ENCODE measurements at regions of chr5 and their contacts with region 1.

Region 1: GRCh38 chr5:146516151-146516475 is at the start of gene GPR151:
- DNase-seq: no peak
- H3K4me3 ChIP-seq: no peak within 1 kb of the TSS
- H3K4me3 Mint-ChIP-seq: no peak within 1 kb of the TSS
- H3K27ac ChIP-seq: no peak within 1 kb of the TSS
- H3K27ac Mint-ChIP-seq: no peak within 1 kb of the TSS
- H3K4me1 ChIP-seq: no peaks in the 10 kb centered on the region
- H3K4me1 Mint-ChIP-seq: no peaks in the 10 kb centered on the region
- H3K27me3 ChIP-seq: no peaks in the 10 kb centered on the region
- H3K27me3 Mint-ChIP-seq: peaks cover 0 to 1% of the 10 kb centered on the region in 2 donors
- total RNA-seq, gene GPR151: not detected

Region 2: GRCh38 chr5:146451411-146452073 is 64.6 kb before region 1 on chr5:
- CTCF ChIA-PET with region 1: no interaction called
- POLR2A ChIA-PET with region 1: no interaction called
- intact Hi-C with region 1: no loop called
- DNase-seq: no peak
- H3K4me3 ChIP-seq: no peak overlapping the region
- H3K4me3 Mint-ChIP-seq: peak overlapping the region in 3 of 8 donors; percentile 31 to 54 (median 31)
- H3K27ac ChIP-seq: no peak overlapping the region
- H3K27ac Mint-ChIP-seq: peak overlapping the region in 1 of 7 donors; percentile 60
- H3K4me1 ChIP-seq: peaks cover 53% of the 10 kb centered on the region
- H3K4me1 Mint-ChIP-seq: peaks cover 38 to 67% (median 53%) of the 10 kb centered on the region in 4 donors
- H3K27me3 ChIP-seq: no peaks in the 10 kb centered on the region
- H3K27me3 Mint-ChIP-seq: no peaks in the 10 kb centered on the region

Region 3: GRCh38 chr5:146533260-146533857 is 17.2 kb after region 1 on chr5:
- CTCF ChIA-PET with region 1: interaction called, 20 read pairs
- POLR2A ChIA-PET with region 1: no interaction called
- intact Hi-C with region 1: no loop called
- DNase-seq: peak; percentile 59 to 66 (median 63)
- H3K4me3 ChIP-seq: no peak overlapping the region
- H3K4me3 Mint-ChIP-seq: no peak overlapping the region
- H3K27ac ChIP-seq: no peak overlapping the region
- H3K27ac Mint-ChIP-seq: peak overlapping the region in 2 of 7 donors; percentile 0 to 30
- H3K4me1 ChIP-seq: no peaks in the 10 kb centered on the region
- H3K4me1 Mint-ChIP-seq: peaks cover 2 to 5% (median 4%) of the 10 kb centered on the region in 4 donors
- H3K27me3 ChIP-seq: no peaks in the 10 kb centered on the region
- H3K27me3 Mint-ChIP-seq: peaks cover 0 to 3% of the 10 kb centered on the region in 2 donors

Region 4: DNA sequence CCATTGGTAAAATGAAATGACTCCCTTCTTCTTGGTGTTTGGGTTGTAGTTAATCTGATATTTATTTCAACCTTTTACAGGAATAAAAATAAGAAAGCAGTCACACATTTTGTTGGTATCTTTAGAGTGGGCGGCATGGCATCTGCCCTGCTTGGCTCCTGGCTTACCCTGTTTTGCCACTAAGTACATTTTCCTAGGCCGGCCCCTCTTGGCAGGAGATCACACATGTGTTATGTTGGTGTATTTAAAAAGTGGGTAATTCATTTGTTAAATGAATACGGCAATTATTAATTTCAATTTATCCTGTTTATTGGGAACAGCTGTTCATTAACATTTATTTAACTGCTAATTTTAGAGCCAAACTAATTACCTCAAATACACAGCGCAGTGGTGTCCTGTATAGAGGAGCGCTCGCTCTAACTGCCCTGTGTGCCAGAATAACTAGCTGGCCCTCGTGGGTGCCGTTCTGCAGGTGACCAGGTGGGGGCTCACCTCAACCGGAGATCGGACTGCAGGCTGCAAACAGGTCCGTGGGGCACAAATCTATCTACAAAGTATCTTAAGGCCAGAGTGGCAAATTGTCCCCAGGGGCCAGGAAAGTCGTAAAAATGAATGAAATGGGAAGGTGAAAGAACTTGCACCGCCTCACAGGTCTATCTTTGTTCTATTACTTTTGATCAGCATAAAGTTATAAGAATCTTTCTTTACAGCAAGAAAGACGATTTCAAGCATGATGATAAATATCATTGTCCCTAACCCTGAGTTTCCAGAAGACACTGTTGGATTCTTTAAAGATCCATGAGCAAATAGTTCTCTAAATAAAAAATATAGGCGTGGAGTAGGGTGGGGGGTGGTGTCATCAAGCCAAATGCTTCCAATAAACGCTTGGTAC is 26.1 kb after region 1 on chr5:
- CTCF ChIA-PET with region 1: interaction called, 11 read pairs
- POLR2A ChIA-PET with region 1: no interaction called
- intact Hi-C with region 1: no loop called
- DNase-seq: peak; percentile 47 to 63 (median 56)
- H3K4me3 ChIP-seq: no peak overlapping the region
- H3K4me3 Mint-ChIP-seq: no peak overlapping the region
- H3K27ac ChIP-seq: no peak overlapping the region
- H3K27ac Mint-ChIP-seq: peak overlapping the region in 1 of 7 donors; percentile 52
- H3K4me1 ChIP-seq: no peaks in the 10 kb centered on the region
- H3K4me1 Mint-ChIP-seq: peaks cover 0 to 4% (median 2%) of the 10 kb centered on the region in 4 donors
- H3K27me3 ChIP-seq: no peaks in the 10 kb centered on the region
- H3K27me3 Mint-ChIP-seq: peaks cover 0 to 1% of the 10 kb centered on the region in 2 donors

Measured in CD4-positive, alpha-beta memory T cell (primary cell).